HEK293T (cell line): ENCODE measurements at regions of chr20 and their contacts with region 1.

Region 1: GRCh38 chr20:56985286-56985685 is 281.2 kb downstream of the BMP7 start:
- DNase-seq: no peak

Region 2: GRCh38 chr20:56909918-56910714 is 75.2 kb before region 1 on chr20:
- CTCF ChIA-PET with region 1: no interaction called
- POLR2A ChIA-PET with region 1: no interaction called
- DNase-seq: no peak

Region 3: GRCh38 chr20:56974499-56975236 is 10.6 kb before region 1 on chr20:
- CTCF ChIA-PET with region 1: interaction called, 12 read pairs
- POLR2A ChIA-PET with region 1: no interaction called
- DNase-seq: peak; percentile 60

Region 4: GRCh38 chr20:57211959-57212895 is 226.9 kb after region 1 on chr20:
- CTCF ChIA-PET with region 1: no interaction called
- POLR2A ChIA-PET with region 1: no interaction called
- DNase-seq: peak; percentile 34